ENCODE measurements at regions of chr20 and their contacts with region 1.

Region 1: GRCh38 chr20:3059489-3059888 is 11.9 kb upstream of the OXT start:
- DNase-seq: no peak
- H3K4me3 ChIP-seq: no peak overlapping the region
- H3K4me1 ChIP-seq: no peaks in the 10 kb centered on the region
- H3K27me3 ChIP-seq: no peaks in the 10 kb centered on the region

Region 2: GRCh38 chr20:2564406-2564805 is 495.1 kb before region 1 on chr20:
- in situ Hi-C with region 1: no loop called
- DNase-seq: no peak
- H3K4me3 ChIP-seq: no peak overlapping the region
- H3K4me1 ChIP-seq: no peaks in the 10 kb centered on the region
- H3K27me3 ChIP-seq: peaks cover 13% of the 10 kb centered on the region

Region 3: DNA sequence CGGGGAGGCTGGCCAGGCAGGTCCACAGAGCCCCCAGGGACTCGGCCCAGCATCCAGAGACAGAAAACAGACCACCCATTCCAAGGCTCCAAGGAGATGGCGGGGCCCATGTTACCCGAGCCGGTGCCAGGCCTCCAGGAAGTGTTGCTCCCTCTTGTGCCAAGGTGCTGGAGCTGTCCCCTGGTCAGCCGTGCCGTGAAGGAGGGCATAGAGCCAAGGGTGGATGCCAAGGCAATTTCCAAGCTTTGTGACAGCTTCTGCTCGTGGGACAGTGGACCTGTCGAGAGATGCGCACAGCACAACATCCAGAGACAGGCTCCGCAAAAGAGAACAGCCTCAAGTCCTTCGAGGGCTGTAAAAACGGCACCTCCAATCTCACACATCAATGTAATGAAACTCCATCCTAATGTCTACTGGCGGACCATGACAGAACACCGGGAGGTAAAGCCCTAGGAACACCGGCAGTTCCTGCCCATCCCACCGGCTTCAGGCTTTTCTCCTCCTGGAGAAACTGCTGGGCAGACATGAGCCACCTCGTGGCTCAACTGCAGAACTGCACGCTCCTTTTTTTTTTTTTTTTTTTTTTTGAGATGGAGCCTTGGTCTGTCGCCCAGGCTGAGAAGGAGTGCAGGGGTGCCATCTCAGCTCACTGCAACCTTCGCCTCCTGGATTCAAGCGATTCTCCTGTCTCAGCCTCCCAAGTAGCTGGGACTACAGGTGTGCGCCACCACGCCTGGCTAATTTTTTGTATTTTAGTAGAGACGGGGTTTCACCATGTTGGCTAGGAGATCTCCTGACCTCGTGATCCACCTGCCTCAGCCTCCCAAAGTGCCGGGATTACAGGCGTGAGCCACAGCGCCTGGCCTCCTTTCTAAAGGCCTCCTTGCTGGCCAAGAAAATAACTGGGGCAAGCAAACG is 56.0 kb after region 1 on chr20:
- in situ Hi-C with region 1: loop called (anchors 5 kb)
- DNase-seq: peak; percentile 52 to 67
- H3K4me3 ChIP-seq: no peak overlapping the region
- H3K4me1 ChIP-seq: no peaks in the 10 kb centered on the region
- H3K27me3 ChIP-seq: no peaks in the 10 kb centered on the region